Naive thymus-derived CD4-positive, alpha-beta T cell (primary cell): ENCODE measurements at regions of chr1 and their contacts with region 1.

Region 1: DNA sequence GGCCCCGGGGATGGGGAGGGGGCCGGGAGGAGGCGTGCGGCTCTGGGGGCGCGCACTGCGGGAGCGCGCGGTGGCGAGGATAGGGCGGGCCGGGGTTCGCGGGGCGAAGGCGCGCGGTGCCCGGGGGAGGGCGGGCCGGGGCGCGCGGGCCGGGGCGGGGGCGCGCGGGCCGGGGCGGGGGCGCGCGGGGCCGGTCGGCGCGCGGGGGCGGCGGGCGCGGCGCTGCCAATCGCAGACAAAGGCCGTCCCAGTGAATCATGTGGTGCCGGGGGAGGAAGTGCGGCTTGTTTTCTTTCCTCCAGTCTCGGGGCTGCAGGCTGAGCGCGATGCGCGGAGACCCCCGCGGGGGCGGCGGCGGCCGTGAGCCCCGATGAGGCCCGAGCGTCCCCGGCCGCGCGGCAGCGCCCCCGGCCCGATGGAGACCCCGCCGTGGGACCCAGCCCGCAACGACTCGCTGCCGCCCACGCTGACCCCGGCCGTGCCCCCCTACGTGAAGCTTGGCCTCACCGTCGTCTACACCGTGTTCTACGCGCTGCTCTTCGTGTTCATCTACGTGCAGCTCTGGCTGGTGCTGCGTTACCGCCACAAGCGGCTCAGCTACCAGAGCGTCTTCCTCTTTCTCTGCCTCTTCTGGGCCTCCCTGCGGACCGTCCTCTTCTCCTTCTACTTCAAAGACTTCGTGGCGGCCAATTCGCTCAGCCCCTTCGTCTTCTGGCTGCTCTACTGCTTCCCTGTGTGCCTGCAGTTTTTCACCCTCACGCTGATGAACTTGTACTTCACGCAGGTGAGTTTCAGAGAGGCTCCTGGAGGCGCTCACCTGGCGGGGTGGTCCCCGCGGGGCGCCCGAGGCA is at the start of gene GPR137B:
- DNase-seq: peak; percentile 17 to 74 (median 37)
- ATAC-seq: peak; percentile 79
- H3K4me3 ChIP-seq: peak within 1 kb of the TSS; percentile 91
- H3K4me3 Mint-ChIP-seq: peak within 1 kb of the TSS; percentile 87 to 99 (median 97)
- H3K27ac ChIP-seq: peak within 1 kb of the TSS; percentile 7
- H3K27ac Mint-ChIP-seq: peak within 1 kb of the TSS in 6 of 9 donors; percentile 52 to 90 (median 76)
- H3K4me1 ChIP-seq: peaks cover 12 to 15% of the 10 kb centered on the region in 2 donors
- H3K4me1 Mint-ChIP-seq: peaks cover 33 to 53% (median 38%) of the 10 kb centered on the region in 7 donors
- H3K27me3 ChIP-seq: no peaks in the 10 kb centered on the region
- H3K27me3 Mint-ChIP-seq: peaks cover 13 to 47% (median 16%) of the 10 kb centered on the region in 5 donors
- total RNA-seq, gene GPR137B: 6.4 to 15.3 (median 7.0) TPM

Region 2: GRCh38 chr1:235357485-235358378 is 784.7 kb before region 1 on chr1:
- CTCF ChIA-PET with region 1: no interaction called
- POLR2A ChIA-PET with region 1: no interaction called
- intact Hi-C with region 1: no loop called
- DNase-seq: no peak
- ATAC-seq: no peak
- H3K4me3 ChIP-seq: no peak overlapping the region
- H3K4me3 Mint-ChIP-seq: no peak overlapping the region
- H3K27ac ChIP-seq: no peak overlapping the region
- H3K27ac Mint-ChIP-seq: peak overlapping the region in 2 of 9 donors; percentile 20 to 24
- H3K4me1 ChIP-seq: no peaks in the 10 kb centered on the region
- H3K4me1 Mint-ChIP-seq: peaks cover 0 to 8% (median 0%) of the 10 kb centered on the region in 7 donors
- H3K27me3 ChIP-seq: no peaks in the 10 kb centered on the region
- H3K27me3 Mint-ChIP-seq: peaks cover 0 to 5% (median 0%) of the 10 kb centered on the region in 5 donors

Region 3: DNA sequence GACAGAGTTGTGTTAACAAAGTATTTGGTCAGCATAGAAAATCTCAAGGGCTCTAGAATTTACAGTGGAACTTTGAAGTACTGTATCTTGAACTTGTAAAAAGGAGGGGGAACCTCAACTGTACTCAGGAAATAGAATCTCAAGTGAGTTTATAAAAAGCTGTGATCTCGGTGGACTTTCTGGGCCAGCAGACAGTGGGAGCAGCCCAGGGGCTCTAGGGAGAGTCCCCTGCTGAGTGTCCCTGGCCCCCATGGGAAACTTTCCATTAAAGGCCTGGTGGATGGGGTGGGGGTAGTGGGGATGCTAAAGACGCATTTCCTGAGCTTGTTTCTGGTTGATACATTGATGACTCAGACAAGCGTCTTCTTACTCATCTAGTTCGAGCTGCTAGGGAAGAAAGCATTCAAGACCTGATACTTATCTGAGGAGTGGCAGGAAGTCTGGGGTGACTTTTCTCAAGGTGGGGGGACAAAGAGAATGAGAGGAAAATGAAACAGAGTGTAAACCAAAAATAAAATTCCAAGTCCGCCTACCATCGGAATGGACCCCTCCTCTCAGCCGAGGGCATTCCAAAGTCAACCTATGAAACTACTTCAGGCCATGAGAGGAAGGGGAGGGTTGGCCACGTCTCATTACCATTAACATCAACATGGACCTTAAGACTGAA is 143.1 kb before region 1 on chr1:
- CTCF ChIA-PET with region 1: no interaction called
- POLR2A ChIA-PET with region 1: no interaction called
- intact Hi-C with region 1: no loop called
- DNase-seq: peak in 8 of 9 donors; percentile 7 to 75 (median 37)
- ATAC-seq: peak; percentile 90
- H3K4me3 ChIP-seq: no peak overlapping the region
- H3K4me3 Mint-ChIP-seq: peak overlapping the region in 9 of 10 donors; percentile 0 to 71 (median 55)
- H3K27ac ChIP-seq: peak overlapping the region; percentile 22
- H3K27ac Mint-ChIP-seq: peak overlapping the region; percentile 19 to 97 (median 80)
- H3K4me1 ChIP-seq: peaks cover 10 to 31% of the 10 kb centered on the region in 2 donors
- H3K4me1 Mint-ChIP-seq: peaks cover 10 to 71% (median 20%) of the 10 kb centered on the region in 7 donors
- H3K27me3 ChIP-seq: no peaks in the 10 kb centered on the region
- H3K27me3 Mint-ChIP-seq: no peaks in the 10 kb centered on the region

Region 4: DNA sequence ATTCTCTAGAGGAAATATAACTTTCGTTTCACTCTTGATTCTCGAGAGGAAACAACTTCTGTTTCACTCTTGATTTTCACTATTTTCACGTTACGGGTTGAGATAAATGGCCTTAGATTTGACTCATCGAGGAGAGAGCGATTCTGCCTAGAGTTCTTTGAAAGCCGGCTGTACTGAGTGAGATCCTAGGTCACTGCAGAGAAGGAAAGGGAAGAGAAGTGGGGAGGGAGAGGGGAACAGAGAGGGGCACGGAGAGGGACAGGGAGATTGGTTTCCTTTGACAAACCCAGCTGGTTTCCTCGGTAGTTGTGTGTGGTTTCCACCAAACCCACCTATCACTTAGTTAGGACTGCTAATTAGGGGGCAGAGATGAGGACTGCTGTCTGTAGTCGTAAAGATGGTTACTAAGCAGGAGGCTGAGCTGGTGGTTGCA is 21.7 kb before region 1 on chr1:
- CTCF ChIA-PET with region 1: no interaction called
- POLR2A ChIA-PET with region 1: no interaction called
- intact Hi-C with region 1: loop called in 1 of 2 experiments (anchors 1 kb)
- DNase-seq: peak in 1 of 9 donors; percentile 11
- ATAC-seq: peak; percentile 55
- H3K4me3 ChIP-seq: peak overlapping the region; percentile 53
- H3K4me3 Mint-ChIP-seq: peak overlapping the region; percentile 70 to 91 (median 82)
- H3K27ac ChIP-seq: no peak overlapping the region
- H3K27ac Mint-ChIP-seq: peak overlapping the region; percentile 8 to 95 (median 85)
- H3K4me1 ChIP-seq: peaks cover 9 to 10% of the 10 kb centered on the region in 2 donors
- H3K4me1 Mint-ChIP-seq: peaks cover 6 to 27% (median 25%) of the 10 kb centered on the region in 7 donors
- H3K27me3 ChIP-seq: no peaks in the 10 kb centered on the region
- H3K27me3 Mint-ChIP-seq: peaks cover 0 to 15% (median 0%) of the 10 kb centered on the region in 5 donors

Region 5: GRCh38 chr1:236156512-236157208 is 14.2 kb after region 1 on chr1:
- CTCF ChIA-PET with region 1: no interaction called
- POLR2A ChIA-PET with region 1: no interaction called
- intact Hi-C with region 1: loop called in 1 of 2 experiments (anchors 1 kb)
- DNase-seq: no peak
- ATAC-seq: peak; percentile 90
- H3K4me3 ChIP-seq: no peak overlapping the region
- H3K4me3 Mint-ChIP-seq: no peak overlapping the region
- H3K27ac ChIP-seq: no peak overlapping the region
- H3K27ac Mint-ChIP-seq: no peak overlapping the region
- H3K4me1 ChIP-seq: peaks cover 0 to 20% of the 10 kb centered on the region in 2 donors
- H3K4me1 Mint-ChIP-seq: peaks cover 0 to 24% (median 0%) of the 10 kb centered on the region in 7 donors
- H3K27me3 ChIP-seq: no peaks in the 10 kb centered on the region
- H3K27me3 Mint-ChIP-seq: no peaks in the 10 kb centered on the region

Region 6: DNA sequence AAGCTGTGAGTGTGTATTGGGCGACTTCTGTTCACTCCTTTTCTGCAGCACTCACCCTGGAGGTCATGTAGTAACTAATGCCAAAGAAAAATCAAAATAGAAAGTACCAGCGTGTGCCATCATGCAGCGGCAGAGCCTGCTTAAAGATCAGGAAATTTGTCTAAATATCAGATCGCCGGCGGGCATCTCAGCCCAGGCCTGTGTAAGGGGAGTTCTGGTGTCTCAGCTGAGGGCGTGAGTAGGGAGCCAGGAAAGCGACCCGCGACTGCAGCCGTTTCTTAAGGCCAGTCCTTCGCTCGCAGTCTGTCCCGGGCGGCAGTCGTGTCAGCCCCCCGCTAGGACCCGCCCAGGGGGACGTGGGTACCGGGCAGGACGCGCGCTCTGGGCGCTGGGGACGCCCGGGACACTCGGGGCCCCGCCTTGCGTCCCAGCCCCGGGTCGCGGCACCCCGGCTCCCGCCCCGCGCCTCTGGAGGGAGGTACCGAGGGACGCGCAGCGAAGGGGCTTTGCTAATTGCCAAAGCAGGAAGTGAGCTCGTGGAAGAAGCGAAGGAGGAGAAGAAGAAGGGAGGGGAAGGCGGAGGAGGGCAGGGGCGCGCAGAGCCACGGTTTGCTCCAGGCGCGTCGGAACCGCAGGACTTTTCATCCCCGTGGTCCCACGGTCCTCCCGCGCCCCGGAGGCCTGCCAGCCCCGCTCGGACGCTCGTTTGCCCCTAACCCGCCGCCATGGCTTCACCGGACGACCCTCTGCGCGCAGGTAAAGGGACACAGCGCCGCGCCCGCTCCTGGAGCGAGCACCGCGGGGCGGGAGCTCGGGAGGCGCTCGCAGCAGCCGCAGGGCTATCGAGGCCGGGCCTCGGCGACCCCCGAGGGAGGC is 252.7 kb after region 1 on chr1:
- CTCF ChIA-PET with region 1: no interaction called
- POLR2A ChIA-PET with region 1: no interaction called
- intact Hi-C with region 1: loop called in 1 of 2 experiments (anchors 1 kb)
- DNase-seq: peak in 3 of 9 donors; percentile 13 to 62 (median 29)
- ATAC-seq: peak; percentile 75
- H3K4me3 ChIP-seq: peak overlapping the region; percentile 70
- H3K4me3 Mint-ChIP-seq: peak overlapping the region; percentile 70 to 96 (median 86)
- H3K27ac ChIP-seq: no peak overlapping the region
- H3K27ac Mint-ChIP-seq: peak overlapping the region in 1 of 9 donors; percentile 86
- H3K4me1 ChIP-seq: peaks cover 3 to 10% of the 10 kb centered on the region in 2 donors
- H3K4me1 Mint-ChIP-seq: peaks cover 15 to 43% (median 22%) of the 10 kb centered on the region in 7 donors
- H3K27me3 ChIP-seq: peaks cover 0 to 5% of the 10 kb centered on the region in 2 donors
- H3K27me3 Mint-ChIP-seq: peaks cover 27 to 67% (median 51%) of the 10 kb centered on the region in 5 donors

Region 7: DNA sequence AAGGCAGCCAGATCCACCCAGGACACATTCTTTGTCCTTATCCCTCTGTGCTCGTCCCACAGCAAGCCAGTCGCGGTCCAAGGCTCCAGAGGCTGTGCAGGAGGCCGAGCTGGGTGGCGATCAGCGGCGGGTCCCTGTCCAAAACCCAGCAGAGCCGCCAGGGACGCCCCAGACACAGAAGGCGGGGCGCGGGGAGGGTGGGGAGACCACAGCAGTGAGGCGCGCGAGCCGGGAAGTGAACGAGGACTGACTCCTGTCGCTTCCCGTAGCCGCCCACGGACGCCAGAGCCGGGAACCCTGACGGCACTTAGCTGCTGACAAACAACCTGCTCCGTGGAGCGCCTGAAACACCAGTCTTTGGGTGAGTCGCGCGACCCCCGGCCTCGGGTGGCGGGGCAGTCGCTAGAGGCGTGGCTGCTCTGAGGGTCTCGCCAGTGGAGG is 381.2 kb after region 1 on chr1 and contains the start of gene LGALS8:
- CTCF ChIA-PET with region 1: no interaction called
- POLR2A ChIA-PET with region 1: no interaction called
- intact Hi-C with region 1: loop called in 1 of 2 experiments (anchors 5 kb)
- DNase-seq: peak; percentile 68 to 87 (median 83)
- ATAC-seq: peak; percentile 90
- H3K4me3 ChIP-seq: peak within 1 kb of the TSS; percentile 70
- H3K4me3 Mint-ChIP-seq: peak within 1 kb of the TSS; percentile 93 to 100 (median 99)
- H3K27ac ChIP-seq: peak within 1 kb of the TSS; percentile 87
- H3K27ac Mint-ChIP-seq: peak within 1 kb of the TSS; percentile 97 to 99 (median 98)
- H3K4me1 ChIP-seq: peaks cover 4 to 5% of the 10 kb centered on the region in 2 donors
- H3K4me1 Mint-ChIP-seq: peaks cover 8 to 38% (median 35%) of the 10 kb centered on the region in 7 donors
- H3K27me3 ChIP-seq: no peaks in the 10 kb centered on the region
- H3K27me3 Mint-ChIP-seq: peaks cover 0 to 3% (median 0%) of the 10 kb centered on the region in 5 donors
- total RNA-seq, gene LGALS8: 114 to 143 (median 134) TPM